Caco-2 (cell line): ENCODE measurements at regions of chr1 and their contacts with region 1.

Region 1: DNA sequence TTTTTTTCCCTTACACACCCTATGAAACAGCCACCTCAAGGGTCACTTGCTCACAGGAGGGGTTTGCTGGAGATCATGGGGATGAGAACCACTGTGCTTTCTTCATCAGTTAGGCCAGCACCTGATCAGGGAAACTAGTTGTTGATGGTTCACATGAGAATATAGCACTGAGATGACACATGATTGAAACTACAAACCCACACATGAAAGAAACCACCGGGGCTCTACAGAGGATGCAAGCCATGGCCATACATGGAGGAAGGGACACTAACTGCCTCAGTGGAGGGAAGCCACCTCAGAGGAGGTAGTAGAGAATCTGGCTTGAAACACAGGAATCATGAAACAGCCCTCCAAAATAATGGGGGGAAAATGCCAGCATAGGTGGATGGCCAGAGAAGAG is 63.2 kb downstream of the PRKAB2 start:
- DNase-seq: no peak
- H3K4me3 ChIP-seq: no peak overlapping the region
- H3K4me3 Mint-ChIP-seq: no peak overlapping the region
- H3K27ac Mint-ChIP-seq: no peak overlapping the region
- H3K4me1 ChIP-seq: peaks cover 50% of the 10 kb centered on the region
- H3K4me1 Mint-ChIP-seq: peaks cover 36% of the 10 kb centered on the region
- H3K27me3 ChIP-seq: no peaks in the 10 kb centered on the region
- H3K27me3 Mint-ChIP-seq: no peaks in the 10 kb centered on the region
- CTCF ChIP-seq: no peak

Region 2: GRCh38 chr1:147080006-147080661 is 28.9 kb before region 1 on chr1:
- CTCF ChIA-PET with region 1: no interaction called
- POLR2A ChIA-PET with region 1: no interaction called
- intact Hi-C with region 1: no loop called
- DNase-seq: no peak
- H3K4me3 ChIP-seq: no peak overlapping the region
- H3K4me3 Mint-ChIP-seq: no peak overlapping the region
- H3K27ac Mint-ChIP-seq: no peak overlapping the region
- H3K4me1 ChIP-seq: no peaks in the 10 kb centered on the region
- H3K4me1 Mint-ChIP-seq: no peaks in the 10 kb centered on the region
- H3K27me3 ChIP-seq: no peaks in the 10 kb centered on the region
- H3K27me3 Mint-ChIP-seq: no peaks in the 10 kb centered on the region
- CTCF ChIP-seq: no peak

Region 3: GRCh38 chr1:147093411-147093810 is 15.6 kb before region 1 on chr1:
- CTCF ChIA-PET with region 1: no interaction called
- POLR2A ChIA-PET with region 1: no interaction called
- intact Hi-C with region 1: loop called (anchors 1 kb)
- DNase-seq: peak in 1 of 2 experiments; percentile 39
- H3K4me3 ChIP-seq: no peak overlapping the region
- H3K4me3 Mint-ChIP-seq: peak overlapping the region; percentile 58
- H3K27ac Mint-ChIP-seq: peak overlapping the region; percentile 54
- H3K4me1 ChIP-seq: peaks cover 9% of the 10 kb centered on the region
- H3K4me1 Mint-ChIP-seq: peaks cover 13% of the 10 kb centered on the region
- H3K27me3 ChIP-seq: no peaks in the 10 kb centered on the region
- H3K27me3 Mint-ChIP-seq: no peaks in the 10 kb centered on the region
- CTCF ChIP-seq: no peak

Region 4: DNA sequence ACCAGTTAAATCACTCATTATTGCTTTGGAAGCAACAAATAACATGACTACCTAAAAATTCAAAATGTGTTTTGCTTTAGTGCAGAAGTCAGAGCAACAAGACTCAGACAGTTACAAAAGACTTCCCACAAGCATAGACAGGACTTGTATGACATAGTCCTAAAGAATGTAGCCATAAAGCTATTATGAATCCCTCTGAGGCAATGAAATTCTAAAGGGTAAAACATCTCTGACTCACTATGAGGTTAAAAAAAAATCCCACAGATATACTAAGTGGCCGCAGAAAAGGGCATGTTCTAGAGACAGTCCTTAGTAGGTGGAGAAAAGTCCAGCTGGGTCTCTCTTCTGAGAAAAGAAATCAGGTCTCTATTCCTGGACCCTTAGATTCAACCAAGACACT is 58.3 kb after region 1 on chr1:
- CTCF ChIA-PET with region 1: no interaction called
- POLR2A ChIA-PET with region 1: no interaction called
- intact Hi-C with region 1: loop called (anchors 5 kb)
- DNase-seq: peak in 1 of 2 experiments; percentile 12
- H3K4me3 ChIP-seq: no peak overlapping the region
- H3K4me3 Mint-ChIP-seq: no peak overlapping the region
- H3K27ac Mint-ChIP-seq: peak overlapping the region; percentile 26
- H3K4me1 ChIP-seq: peaks cover 46% of the 10 kb centered on the region
- H3K4me1 Mint-ChIP-seq: peaks cover 39% of the 10 kb centered on the region
- H3K27me3 ChIP-seq: no peaks in the 10 kb centered on the region
- H3K27me3 Mint-ChIP-seq: no peaks in the 10 kb centered on the region
- CTCF ChIP-seq: no peak

Region 5: DNA sequence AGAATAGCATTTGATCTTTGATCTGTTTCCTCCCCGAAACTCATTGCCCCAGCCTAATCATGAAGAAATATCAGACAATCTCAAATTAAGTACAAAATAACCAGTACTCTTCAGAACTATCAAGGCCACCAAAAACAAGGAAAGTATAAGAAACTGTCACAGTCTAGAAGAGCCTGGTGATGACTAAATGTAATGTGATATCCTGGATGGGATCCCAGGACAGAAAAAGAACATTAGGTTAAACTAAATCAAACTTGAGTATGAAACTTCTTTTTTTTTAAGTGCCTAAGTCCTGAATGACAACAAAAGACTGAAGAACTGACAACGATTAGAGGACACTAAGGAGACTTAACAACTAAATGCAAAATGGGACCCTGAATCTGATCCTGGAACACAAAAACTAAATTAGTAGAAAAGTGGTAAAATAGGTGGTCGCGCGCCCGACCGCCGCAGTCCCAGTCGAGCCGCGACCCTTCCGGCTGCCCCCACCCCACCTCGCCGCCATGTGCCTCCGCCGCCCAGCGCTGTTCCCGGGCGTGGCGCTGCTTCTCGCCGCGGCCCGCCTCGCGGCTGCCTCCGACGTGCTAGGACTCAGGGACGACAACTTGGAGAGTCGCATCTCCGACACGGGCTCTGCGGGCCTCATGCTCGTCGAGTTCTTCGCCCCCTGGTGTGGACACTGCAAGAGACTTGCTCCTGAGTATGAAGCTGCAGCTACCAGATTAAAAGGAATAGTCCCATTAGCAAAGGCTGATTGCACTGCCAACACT is 68.8 kb after region 1 on chr1:
- CTCF ChIA-PET with region 1: no interaction called
- POLR2A ChIA-PET with region 1: no interaction called
- intact Hi-C with region 1: no loop called
- DNase-seq: no peak
- H3K4me3 ChIP-seq: no peak overlapping the region
- H3K4me3 Mint-ChIP-seq: no peak overlapping the region
- H3K27ac Mint-ChIP-seq: no peak overlapping the region
- H3K4me1 ChIP-seq: no peaks in the 10 kb centered on the region
- H3K4me1 Mint-ChIP-seq: peaks cover 6% of the 10 kb centered on the region
- H3K27me3 ChIP-seq: no peaks in the 10 kb centered on the region
- H3K27me3 Mint-ChIP-seq: no peaks in the 10 kb centered on the region
- CTCF ChIP-seq: no peak